PC-9 (cell line): ENCODE measurements at regions of chr14 and their contacts with region 1.

Region 1: DNA sequence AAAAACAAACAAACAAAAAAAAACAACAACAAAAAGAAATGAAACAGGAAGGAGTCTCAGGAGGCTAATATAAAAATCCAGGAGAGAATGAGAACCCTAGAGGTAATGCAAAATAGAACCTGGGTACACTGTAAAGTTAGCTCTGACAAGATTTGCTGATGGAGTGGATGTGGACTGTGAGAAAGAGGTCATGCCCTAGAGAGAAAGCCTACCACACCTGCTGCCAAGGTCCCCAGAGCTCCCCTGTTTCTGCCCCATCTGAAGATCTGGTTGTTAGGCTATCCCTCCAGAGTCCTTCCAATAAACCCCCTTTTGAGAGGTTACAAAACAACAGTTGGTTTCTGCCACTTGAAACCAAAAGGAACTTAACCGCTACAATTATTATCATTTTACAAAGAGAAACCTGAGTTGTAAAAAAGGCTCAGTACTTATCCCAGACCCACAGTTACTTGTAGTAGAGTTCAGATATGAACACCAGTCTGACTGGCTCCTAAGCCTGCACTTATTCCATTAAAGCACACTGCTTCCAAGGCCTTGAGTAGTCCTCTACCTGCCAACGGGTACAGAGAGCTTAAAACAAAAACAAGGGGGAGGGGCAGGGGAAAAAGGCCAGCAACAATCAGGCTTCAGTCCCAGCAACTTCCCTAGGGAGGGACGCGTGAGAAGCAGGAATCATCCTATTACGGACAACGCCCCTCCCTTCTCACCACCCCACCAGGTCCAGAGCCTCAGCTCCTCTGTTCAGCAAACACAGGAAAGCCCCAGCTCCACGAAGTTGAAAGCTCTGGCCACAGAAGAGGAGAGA is 27.7 kb downstream of the PPP1R13B start:
- DNase-seq: no peak
- H3K4me3 ChIP-seq: no peak overlapping the region
- H3K27ac ChIP-seq: no peak overlapping the region
- H3K4me1 ChIP-seq: no peaks in the 10 kb centered on the region
- H3K27me3 ChIP-seq: no peaks in the 10 kb centered on the region
- CTCF ChIP-seq: no peak

Region 2: DNA sequence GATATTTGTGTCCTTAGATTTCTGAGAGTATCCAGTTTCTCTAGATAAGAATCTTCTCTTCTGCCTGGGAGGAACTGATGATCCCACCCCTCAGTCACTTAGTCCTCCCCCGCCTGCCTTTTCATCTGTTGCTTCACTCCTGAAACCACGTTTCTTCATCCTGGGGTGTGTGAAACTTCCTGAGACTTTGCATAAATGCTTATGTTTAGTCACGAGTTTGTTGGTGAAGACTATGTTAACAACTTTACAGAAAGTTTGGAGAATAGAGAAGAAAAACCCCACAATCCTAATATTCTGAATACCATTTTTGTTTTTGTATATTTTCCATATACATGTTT is 401.3 kb before region 1 on chr14:
- CTCF ChIA-PET with region 1: no interaction called
- POLR2A ChIA-PET with region 1: interaction called, 17 read pairs
- intact Hi-C with region 1: no loop called
- DNase-seq: no peak
- H3K4me3 ChIP-seq: no peak overlapping the region
- H3K27ac ChIP-seq: peak overlapping the region; percentile 7
- H3K4me1 ChIP-seq: peaks cover 36% of the 10 kb centered on the region
- H3K27me3 ChIP-seq: no peaks in the 10 kb centered on the region
- CTCF ChIP-seq: no peak

Region 3: GRCh38 chr14:103808403-103809001 is 11.2 kb before region 1 on chr14:
- CTCF ChIA-PET with region 1: no interaction called
- POLR2A ChIA-PET with region 1: interaction called, 11 read pairs
- intact Hi-C with region 1: no loop called
- DNase-seq: peak; percentile 49 to 69
- H3K4me3 ChIP-seq: no peak overlapping the region
- H3K27ac ChIP-seq: no peak overlapping the region
- H3K4me1 ChIP-seq: no peaks in the 10 kb centered on the region
- H3K27me3 ChIP-seq: no peaks in the 10 kb centered on the region
- CTCF ChIP-seq: peak; percentile 92

Region 4: GRCh38 chr14:103910262-103910935 is 90.7 kb after region 1 on chr14:
- CTCF ChIA-PET with region 1: interaction called, 10 read pairs
- POLR2A ChIA-PET with region 1: no interaction called
- intact Hi-C with region 1: no loop called
- DNase-seq: peak; percentile 84 to 93
- H3K4me3 ChIP-seq: no peak overlapping the region
- H3K27ac ChIP-seq: no peak overlapping the region
- H3K4me1 ChIP-seq: 0 out of 2 replicates have a peak, but pooled peaks cover 3% of the 10 kb centered on the region
- H3K27me3 ChIP-seq: no peaks in the 10 kb centered on the region
- CTCF ChIP-seq: peak; percentile 87

Region 5: GRCh38 chr14:103928011-103928890 is 108.5 kb after region 1 on chr14 and contains the start of gene TDRD9:
- CTCF ChIA-PET with region 1: no interaction called
- POLR2A ChIA-PET with region 1: interaction called, 33 read pairs
- intact Hi-C with region 1: no loop called
- DNase-seq: no peak
- H3K4me3 ChIP-seq: no peak within 1 kb of the TSS
- H3K27ac ChIP-seq: no peak within 1 kb of the TSS
- H3K4me1 ChIP-seq: peaks cover 17% of the 10 kb centered on the region
- H3K27me3 ChIP-seq: no peaks in the 10 kb centered on the region
- CTCF ChIP-seq: no peak
- total RNA-seq, gene TDRD9: 0.15 TPM in 1 of 2 replicates, not detected in the other